ENCODE measurements at regions of chr5 and their contacts with region 1.

Region 1: GRCh38 chr5:134267366-134268018 is 41.6 kb upstream of the PPP2CA start:
- DNase-seq: no peak
- H3K4me3 ChIP-seq: no peak overlapping the region
- H3K27ac ChIP-seq: no peak overlapping the region
- H3K4me1 ChIP-seq: peaks cover 9% of the 10 kb centered on the region; the same call in 1 of the 2 replicates
- H3K27me3 ChIP-seq: no peaks in the 10 kb centered on the region
- CTCF ChIP-seq: no peak

Region 2: DNA sequence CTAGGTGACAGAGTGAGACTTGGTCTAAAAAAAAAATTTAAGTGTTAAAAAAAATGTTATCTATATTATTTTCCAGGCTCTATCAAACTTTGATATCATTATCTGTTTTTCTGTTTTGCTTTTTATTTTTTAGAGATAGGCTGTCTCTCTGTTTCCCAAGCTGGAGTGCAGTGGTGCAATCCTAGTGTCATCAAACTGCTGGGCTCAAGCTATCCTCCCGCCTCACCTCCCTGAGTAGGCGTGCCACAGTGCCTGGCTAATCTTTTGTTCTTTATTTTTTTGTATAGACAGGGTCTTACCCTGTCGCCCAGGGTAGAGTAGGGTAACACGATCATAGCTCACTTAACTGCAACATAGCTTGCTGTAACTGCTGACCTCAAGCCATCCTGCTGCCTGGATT is 395.5 kb after region 1 on chr5:
- CTCF ChIA-PET with region 1: no interaction called
- POLR2A ChIA-PET with region 1: no interaction called
- intact Hi-C with region 1: no loop called
- DNase-seq: no peak
- H3K4me3 ChIP-seq: no peak overlapping the region
- H3K27ac ChIP-seq: no peak overlapping the region
- H3K4me1 ChIP-seq: no peaks in the 10 kb centered on the region
- H3K27me3 ChIP-seq: no peaks in the 10 kb centered on the region
- CTCF ChIP-seq: no peak

Region 3: GRCh38 chr5:135488727-135489465 is 1221.4 kb after region 1 on chr5:
- CTCF ChIA-PET with region 1: no interaction called
- POLR2A ChIA-PET with region 1: interaction called, 40 read pairs
- intact Hi-C with region 1: no loop called
- DNase-seq: peak in 1 of 2 experiments; percentile 40
- H3K4me3 ChIP-seq: peak overlapping the region; percentile 40; the same call in 1 of the 2 replicates
- H3K27ac ChIP-seq: no peak overlapping the region
- H3K4me1 ChIP-seq: peaks cover 4% of the 10 kb centered on the region
- H3K27me3 ChIP-seq: peaks cover 41% of the 10 kb centered on the region
- CTCF ChIP-seq: no peak